GM12878 (cell line): ENCODE measurements at regions of chr5 and their contacts with region 1.

Region 1: GRCh38 chr5:40486437-40487275 is 193.1 kb upstream of the PTGER4 start:
- DNase-seq: peak; percentile 82
- ATAC-seq: peak; percentile 66
- H3K4me3 ChIP-seq: no peak overlapping the region; the same call in 1 of the 2 replicates
- H3K27ac ChIP-seq: peak overlapping the region; percentile 45; the same call in 1 of the 2 replicates
- H3K4me1 ChIP-seq: peaks cover 46% of the 10 kb centered on the region
- H3K27me3 ChIP-seq: no peaks in the 10 kb centered on the region
- CTCF ChIP-seq: no peak
- EP300 ChIP-seq: peak; percentile 73 to 89
- POLR2A ChIP-seq: no peak
- RAD21 ChIP-seq: no peak

Region 2: DNA sequence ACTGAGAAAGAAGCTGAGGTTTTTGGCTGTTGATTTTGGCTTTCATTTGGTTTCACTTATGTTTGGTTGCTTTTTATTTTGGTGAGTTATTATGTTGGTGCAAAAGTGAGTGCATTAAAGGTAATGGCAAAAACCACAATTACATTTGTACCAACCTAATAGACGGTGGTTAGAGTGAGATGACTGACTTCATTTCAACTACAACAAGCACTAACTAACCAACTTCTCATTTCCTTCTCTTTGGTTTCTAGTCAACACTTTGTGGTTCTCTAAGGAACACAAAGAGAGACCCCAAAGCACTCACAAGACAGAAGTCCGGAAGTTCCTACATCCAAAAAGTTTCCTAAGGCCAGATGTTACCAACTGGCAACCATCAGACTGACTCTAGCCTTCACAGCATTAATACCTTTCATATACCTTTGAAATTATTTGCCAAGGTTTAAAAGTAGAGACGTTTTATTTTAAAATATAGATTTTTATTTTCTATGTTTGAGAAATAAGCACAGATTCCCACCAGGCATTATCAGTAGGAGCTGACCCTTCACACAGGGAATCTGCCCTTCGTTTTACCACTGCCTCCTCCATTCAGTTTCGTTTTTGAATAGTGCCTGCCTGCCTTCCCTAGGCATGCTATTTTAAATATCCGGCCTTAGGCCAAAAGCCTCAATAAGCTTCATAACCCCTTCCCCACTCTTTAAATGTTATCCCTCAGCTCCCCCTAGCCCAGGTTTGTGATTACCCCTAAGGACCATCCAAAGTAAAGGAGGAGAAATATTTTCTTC is 108.1 kb before region 1 on chr5:
- CTCF ChIA-PET with region 1: interaction called, 3 read pairs
- POLR2A ChIA-PET with region 1: interaction called, 3 read pairs
- RAD21 ChIA-PET with region 1: interaction called, 4 read pairs
- SMC1A ChIA-PET with region 1: interaction called, 6 read pairs
- in situ Hi-C with region 1: loop called (anchors 5 kb)
- intact Hi-C with region 1: loop called (anchors 1 kb)
- DNase-seq: peak; percentile 62
- ATAC-seq: peak; percentile 88
- H3K4me3 ChIP-seq: no peak overlapping the region
- H3K27ac ChIP-seq: no peak overlapping the region
- H3K4me1 ChIP-seq: peaks cover 19% of the 10 kb centered on the region
- H3K27me3 ChIP-seq: no peaks in the 10 kb centered on the region
- CTCF ChIP-seq: no peak
- EP300 ChIP-seq: peak in 1 of 2 experiments; percentile 30; a peak in 1 of 4 replicates
- POLR2A ChIP-seq: no peak
- RAD21 ChIP-seq: no peak

Region 3: GRCh38 chr5:40437452-40437861 is 49.2 kb before region 1 on chr5:
- CTCF ChIA-PET with region 1: interaction called, 4 read pairs
- POLR2A ChIA-PET with region 1: interaction called, 10 read pairs
- RAD21 ChIA-PET with region 1: interaction called, 9 read pairs
- SMC1A ChIA-PET with region 1: interaction called, 32 read pairs
- in situ Hi-C with region 1: no loop called
- intact Hi-C with region 1: loop called (anchors 1 kb)
- DNase-seq: no peak
- ATAC-seq: peak; percentile 89
- H3K4me3 ChIP-seq: no peak overlapping the region
- H3K27ac ChIP-seq: no peak overlapping the region
- H3K4me1 ChIP-seq: peaks cover 5% of the 10 kb centered on the region; the same call in 1 of the 2 replicates
- H3K27me3 ChIP-seq: no peaks in the 10 kb centered on the region
- CTCF ChIP-seq: no peak
- EP300 ChIP-seq: no peak
- POLR2A ChIP-seq: no peak
- RAD21 ChIP-seq: no peak

Region 4: GRCh38 chr5:40518511-40518967 is 31.9 kb after region 1 on chr5:
- CTCF ChIA-PET with region 1: no interaction called
- POLR2A ChIA-PET with region 1: no interaction called
- RAD21 ChIA-PET with region 1: no interaction called
- SMC1A ChIA-PET with region 1: no interaction called
- in situ Hi-C with region 1: no loop called
- intact Hi-C with region 1: no loop called
- DNase-seq: no peak
- ATAC-seq: no peak
- H3K4me3 ChIP-seq: no peak overlapping the region
- H3K27ac ChIP-seq: no peak overlapping the region
- H3K4me1 ChIP-seq: no peaks in the 10 kb centered on the region
- H3K27me3 ChIP-seq: peaks cover 2 to 3% of the 10 kb centered on the region in 2 experiments; a peak in 2 of 4 replicates
- CTCF ChIP-seq: no peak
- EP300 ChIP-seq: no peak
- POLR2A ChIP-seq: no peak
- RAD21 ChIP-seq: no peak

Region 5: DNA sequence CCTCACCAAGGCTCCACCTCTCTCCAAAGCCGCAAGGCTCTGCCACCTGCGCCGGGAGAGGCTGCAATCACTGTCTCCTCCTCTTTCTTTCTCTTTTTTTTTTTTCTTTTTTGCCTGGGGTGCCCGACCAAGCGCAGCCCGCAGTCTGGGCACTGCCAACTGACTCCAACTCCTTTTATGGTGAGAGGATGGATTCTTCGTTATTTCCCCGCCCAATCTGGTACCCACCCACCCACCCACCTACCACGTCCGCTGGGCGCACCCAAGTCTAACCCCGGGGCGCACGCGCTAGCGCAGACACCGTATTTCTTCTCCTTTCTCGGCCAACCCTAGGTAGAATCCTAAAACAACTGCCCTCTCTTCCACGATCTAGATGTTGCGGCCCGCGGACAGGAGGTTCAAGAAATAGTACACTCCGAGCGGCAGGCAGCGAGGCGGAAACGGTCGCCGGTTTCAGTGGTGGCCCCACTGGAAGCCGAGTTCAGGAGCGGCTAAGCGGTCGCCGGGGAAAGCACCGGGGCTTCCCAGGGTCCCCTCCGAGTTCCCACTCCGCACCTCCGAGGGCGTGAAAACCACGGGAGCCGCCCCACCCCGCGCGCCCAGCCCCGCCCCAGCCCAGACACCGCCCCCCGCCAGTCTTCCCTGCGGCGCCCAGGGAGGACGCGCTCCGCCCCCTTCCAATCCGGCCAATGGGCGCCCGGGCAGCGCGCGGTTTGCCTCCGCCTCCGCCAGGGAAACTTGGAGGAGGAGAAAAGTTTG is 192.7 kb after region 1 on chr5:
- CTCF ChIA-PET with region 1: interaction called, 4 read pairs
- POLR2A ChIA-PET with region 1: no interaction called
- RAD21 ChIA-PET with region 1: interaction called, 12 read pairs
- SMC1A ChIA-PET with region 1: interaction called, 9 read pairs
- in situ Hi-C with region 1: loop called (anchors 5 kb)
- intact Hi-C with region 1: loop called (anchors 2 kb)
- DNase-seq: peak; percentile 34
- ATAC-seq: peak; percentile 87
- H3K4me3 ChIP-seq: peak overlapping the region; percentile 77
- H3K27ac ChIP-seq: no peak overlapping the region
- H3K4me1 ChIP-seq: peaks cover 8% of the 10 kb centered on the region
- H3K27me3 ChIP-seq: peaks cover 5 to 19% of the 10 kb centered on the region in 2 experiments; a peak in 3 of 4 replicates
- CTCF ChIP-seq: no peak
- EP300 ChIP-seq: no peak
- POLR2A ChIP-seq: no peak
- RAD21 ChIP-seq: no peak

Region 6: DNA sequence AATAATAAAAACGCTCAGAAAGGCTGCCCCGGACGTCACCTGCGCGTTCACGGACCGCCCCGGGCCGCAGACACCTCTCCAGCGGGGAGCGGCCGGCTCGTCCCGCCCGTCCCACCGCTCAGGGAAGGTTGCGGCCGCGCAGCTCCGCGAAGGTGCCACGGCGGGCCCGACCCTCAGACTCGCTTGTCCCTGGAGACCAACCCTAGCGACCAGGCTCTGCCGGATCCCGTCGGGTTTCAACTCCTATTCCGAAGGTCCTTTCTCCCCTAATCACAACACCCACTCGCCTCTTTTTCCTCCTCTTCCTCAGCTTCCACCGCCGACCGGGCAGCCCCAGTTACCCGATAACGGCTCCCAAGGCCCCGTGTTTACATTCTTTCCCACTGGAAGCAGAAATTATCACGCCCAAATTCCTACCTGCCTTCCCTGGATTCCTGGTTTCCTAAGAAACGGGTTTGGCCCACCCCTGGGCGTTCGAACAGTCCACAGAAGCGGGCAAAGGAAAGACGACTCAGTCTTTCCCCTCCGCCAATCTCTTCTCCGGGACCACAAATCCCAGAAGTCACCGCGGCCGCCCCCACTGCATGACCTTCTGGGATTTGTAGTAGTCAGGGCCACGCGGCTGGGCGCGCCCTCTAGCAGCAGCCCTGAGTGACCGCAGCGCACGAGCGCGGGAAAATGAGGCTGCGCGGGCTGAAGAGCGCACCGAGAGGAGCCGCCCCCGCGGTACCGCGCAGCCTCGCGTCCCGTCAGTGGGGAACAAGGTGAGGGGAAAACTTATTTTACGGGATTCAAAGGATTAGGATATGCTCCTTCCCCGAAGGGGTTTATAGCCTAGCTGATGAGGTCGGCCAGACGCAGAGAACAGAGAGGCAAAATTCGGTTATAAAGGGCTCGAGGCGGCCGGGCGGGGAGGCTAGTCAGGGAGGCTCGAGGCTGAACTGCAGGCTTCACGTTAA is 269.0 kb after region 1 on chr5 and contains the start of gene TTC33:
- CTCF ChIA-PET with region 1: no interaction called
- POLR2A ChIA-PET with region 1: no interaction called
- RAD21 ChIA-PET with region 1: no interaction called
- SMC1A ChIA-PET with region 1: no interaction called
- in situ Hi-C with region 1: no loop called
- intact Hi-C with region 1: no loop called
- DNase-seq: peak; percentile 61
- ATAC-seq: peak; percentile 95
- H3K4me3 ChIP-seq: peak within 1 kb of the TSS; percentile 88
- H3K27ac ChIP-seq: peak within 1 kb of the TSS; percentile 74
- H3K4me1 ChIP-seq: peaks cover 7% of the 10 kb centered on the region; the same call in 1 of the 2 replicates
- H3K27me3 ChIP-seq: no peaks in the 10 kb centered on the region
- CTCF ChIP-seq: peak; percentile 61 to 87 (median 69)
- EP300 ChIP-seq: no peak
- POLR2A ChIP-seq: no peak; the same call in none of the 2 replicates
- RAD21 ChIP-seq: peak; percentile 21; the same call in 1 of the 2 replicates
- polyA plus RNA-seq, gene TTC33: 13.4 to 20.3 TPM